Ovary (tissue), 10 donors: ENCODE measurements at regions of chr3 and their contacts with region 1.

Region 1: GRCh38 chr3:71652781-71653413 is 69.4 kb upstream of the FOXP1 start:
- DNase-seq: peak in 4 of 5 donors; percentile 15 to 39 (median 32)
- H3K4me3 ChIP-seq: no peak overlapping the region
- H3K27ac ChIP-seq: no peak overlapping the region
- H3K4me1 ChIP-seq: no peaks in the 10 kb centered on the region
- H3K27me3 ChIP-seq: no peaks in the 10 kb centered on the region
- CTCF ChIP-seq: peak in 2 of 3 donors; percentile 42 to 54
- EP300 ChIP-seq: no peak
- POLR2A ChIP-seq: no peak

Region 2: DNA sequence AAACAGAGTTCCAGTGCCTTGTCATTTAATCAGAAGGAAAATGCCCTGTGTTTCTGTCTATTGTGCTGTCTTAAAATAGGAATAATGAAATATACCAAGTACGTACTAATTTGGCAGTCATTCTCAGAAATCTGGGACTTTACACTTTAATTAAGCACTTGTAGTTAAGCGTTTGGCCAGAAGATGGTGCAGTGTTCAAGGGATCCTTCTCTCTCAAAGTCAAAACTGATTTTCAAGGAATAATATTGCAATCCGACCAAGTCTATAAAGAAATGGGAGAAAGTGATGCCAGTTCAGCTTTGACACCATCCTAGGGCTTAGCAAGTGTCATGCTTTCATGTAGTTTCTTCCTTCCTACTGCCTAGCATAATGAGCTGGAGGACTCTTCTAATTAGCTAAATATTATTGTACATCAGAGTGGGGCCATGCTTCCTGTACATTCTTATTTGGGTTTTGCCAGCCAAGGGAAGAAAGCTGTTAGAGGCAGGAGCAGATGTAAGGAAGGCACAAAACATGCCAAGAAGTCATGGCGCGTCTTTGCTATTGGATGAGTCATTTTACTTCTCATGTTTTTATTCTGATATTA is 1588.6 kb before region 1 on chr3:
- intact Hi-C with region 1: loop called in 1 of 4 experiments (anchors 10 kb)
- DNase-seq: peak in 1 of 5 donors; percentile 19
- H3K4me3 ChIP-seq: no peak overlapping the region
- H3K27ac ChIP-seq: no peak overlapping the region
- H3K4me1 ChIP-seq: no peaks in the 10 kb centered on the region
- H3K27me3 ChIP-seq: no peaks in the 10 kb centered on the region
- CTCF ChIP-seq: peak; percentile 22 to 48 (median 45)
- EP300 ChIP-seq: no peak
- POLR2A ChIP-seq: no peak

Region 3: DNA sequence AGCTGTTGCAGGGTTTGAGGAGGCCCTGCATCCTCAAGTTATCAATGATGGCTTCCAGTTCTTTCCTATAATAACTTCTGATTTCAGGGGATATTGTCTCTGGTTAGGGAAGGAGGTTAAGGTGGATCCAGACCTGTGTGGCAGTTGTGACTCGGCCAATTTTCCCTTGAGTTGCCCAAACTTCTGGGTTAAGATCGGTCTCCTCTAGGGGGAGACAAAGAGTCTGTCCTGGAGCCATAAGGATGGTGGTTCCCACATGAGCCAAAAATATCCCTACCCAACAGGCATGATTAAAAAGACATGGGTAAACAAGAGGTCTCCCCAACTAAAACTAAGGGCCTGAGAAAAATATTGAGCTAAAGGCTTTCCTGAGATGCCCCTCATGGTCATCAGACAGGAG is 1113.0 kb before region 1 on chr3:
- intact Hi-C with region 1: loop called in 1 of 4 experiments (anchors 5 kb)
- DNase-seq: no peak
- H3K4me3 ChIP-seq: no peak overlapping the region
- H3K27ac ChIP-seq: no peak overlapping the region
- H3K4me1 ChIP-seq: no peaks in the 10 kb centered on the region
- H3K27me3 ChIP-seq: no peaks in the 10 kb centered on the region
- CTCF ChIP-seq: no peak
- EP300 ChIP-seq: no peak
- POLR2A ChIP-seq: no peak

Region 4: DNA sequence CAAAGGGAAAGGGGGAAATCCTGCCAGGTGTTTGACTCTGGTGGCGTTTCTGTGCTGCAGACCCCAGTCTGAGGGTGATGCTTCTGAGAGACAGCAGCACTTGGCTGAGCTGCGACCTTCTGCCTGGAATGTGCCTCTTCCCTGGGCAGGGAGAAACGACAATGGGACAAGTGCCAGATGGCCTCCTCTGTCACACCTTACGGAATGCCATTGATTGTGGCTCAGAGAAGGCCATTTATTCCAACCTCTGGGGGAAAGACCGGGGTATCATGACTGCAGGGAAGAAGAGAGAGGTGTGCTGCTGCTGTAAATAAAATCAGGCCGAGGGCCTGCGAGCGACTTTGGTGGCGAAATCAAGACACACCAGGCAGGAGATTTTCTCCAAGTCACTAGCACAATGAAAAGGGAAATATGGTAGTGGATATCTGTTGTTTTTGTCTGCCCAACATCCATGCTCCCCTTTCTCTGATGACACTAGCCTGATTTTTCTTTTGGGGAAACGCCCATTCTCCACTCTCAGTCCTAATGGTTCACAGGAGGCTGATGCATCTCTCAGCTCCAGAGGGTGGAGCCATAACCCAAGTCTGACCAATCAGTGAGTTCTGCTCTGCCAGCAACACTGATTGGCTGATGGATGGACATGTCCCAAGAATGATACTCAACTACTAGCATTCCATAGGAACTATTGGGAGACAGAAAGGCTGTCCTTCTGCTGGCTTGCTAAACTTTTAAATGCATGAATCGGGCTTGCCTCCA is 405.5 kb before region 1 on chr3:
- intact Hi-C with region 1: no loop called
- DNase-seq: no peak
- H3K4me3 ChIP-seq: no peak overlapping the region
- H3K27ac ChIP-seq: no peak overlapping the region
- H3K4me1 ChIP-seq: peaks cover 8% of the 10 kb centered on the region
- H3K27me3 ChIP-seq: no peaks in the 10 kb centered on the region
- CTCF ChIP-seq: no peak
- EP300 ChIP-seq: no peak
- POLR2A ChIP-seq: no peak

Region 5: DNA sequence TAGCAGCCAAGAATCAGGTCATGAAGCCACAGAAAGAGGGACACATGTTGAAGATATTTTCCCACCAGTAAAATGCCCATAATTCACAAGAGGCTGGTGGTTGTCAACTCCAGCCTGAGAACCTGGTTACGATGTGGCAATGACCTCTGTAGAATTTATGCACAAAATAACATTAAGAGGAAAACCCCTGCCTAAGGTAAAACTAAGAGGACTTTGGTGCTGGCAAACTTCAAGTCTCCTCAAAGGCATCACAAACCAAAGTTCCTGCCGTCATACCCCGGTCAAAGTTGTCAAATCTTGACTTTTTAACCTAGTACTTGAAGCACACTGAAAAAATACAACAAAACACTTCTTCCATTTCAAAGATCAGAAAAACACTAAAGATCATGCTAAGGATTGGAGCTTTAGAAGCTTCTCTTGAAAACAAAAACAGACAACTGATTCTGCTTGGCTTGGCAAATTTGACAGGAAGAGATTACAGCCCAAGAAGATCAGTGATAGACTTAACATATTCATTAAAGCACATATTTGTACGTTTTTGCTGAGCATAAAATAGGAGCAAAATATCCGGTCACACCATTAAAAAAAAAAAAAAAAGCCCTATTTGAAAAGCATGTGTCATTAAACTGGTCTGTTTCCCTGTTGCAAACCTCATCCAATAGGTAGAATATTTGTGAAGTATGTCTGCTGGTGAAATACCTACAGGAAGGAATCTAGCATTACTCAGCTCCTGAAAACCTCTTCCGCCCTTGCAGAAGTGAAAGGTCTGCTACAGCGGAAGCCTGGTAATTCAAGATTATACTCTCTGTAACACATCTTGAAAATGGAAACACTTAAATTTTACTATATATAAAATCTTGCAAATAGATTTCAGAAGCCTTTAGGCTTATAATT is 49.5 kb after region 1 on chr3:
- intact Hi-C with region 1: no loop called
- DNase-seq: no peak
- H3K4me3 ChIP-seq: no peak overlapping the region
- H3K27ac ChIP-seq: no peak overlapping the region
- H3K4me1 ChIP-seq: peaks cover 4% of the 10 kb centered on the region
- H3K27me3 ChIP-seq: no peaks in the 10 kb centered on the region
- CTCF ChIP-seq: no peak
- EP300 ChIP-seq: no peak
- POLR2A ChIP-seq: no peak